Left ventricle myocardium superior (tissue), 1 donor: ENCODE measurements at regions of chr10 and their contacts with region 1.

Region 1: GRCh38 chr10:88553116-88553752 is 29.9 kb downstream of the RNLS start:
- DNase-seq: no peak
- ATAC-seq: peak; percentile 93

Region 2: DNA sequence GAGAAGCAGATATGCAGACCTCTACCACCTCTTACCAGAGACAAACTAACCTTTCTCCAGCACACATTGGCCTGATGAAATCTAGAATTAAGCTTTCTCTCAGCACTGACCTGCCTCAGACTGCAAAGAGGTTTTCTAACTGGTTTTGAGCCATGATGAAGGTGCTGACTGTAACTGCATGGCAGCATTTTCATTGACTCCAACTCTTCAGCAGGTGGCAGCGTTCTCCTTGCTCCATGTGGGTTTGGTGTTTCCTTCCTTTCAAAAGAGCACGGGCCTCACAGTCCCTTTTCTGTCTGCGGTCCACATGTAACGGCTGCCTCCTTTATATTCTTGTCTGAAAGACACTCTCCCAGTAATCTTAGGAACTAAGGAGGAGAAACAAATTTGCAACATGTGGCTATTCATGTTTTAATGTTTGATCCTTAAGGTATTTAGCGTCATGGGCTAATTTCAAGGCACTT is 702.5 kb before region 1 on chr10:
- intact Hi-C with region 1: loop called (anchors 5 kb)
- DNase-seq: peak; percentile 55
- ATAC-seq: peak; percentile 97

Region 3: GRCh38 chr10:88138319-88138848 is 414.9 kb before region 1 on chr10:
- intact Hi-C with region 1: loop called (anchors 10 kb)
- DNase-seq: no peak
- ATAC-seq: no peak

Region 4: DNA sequence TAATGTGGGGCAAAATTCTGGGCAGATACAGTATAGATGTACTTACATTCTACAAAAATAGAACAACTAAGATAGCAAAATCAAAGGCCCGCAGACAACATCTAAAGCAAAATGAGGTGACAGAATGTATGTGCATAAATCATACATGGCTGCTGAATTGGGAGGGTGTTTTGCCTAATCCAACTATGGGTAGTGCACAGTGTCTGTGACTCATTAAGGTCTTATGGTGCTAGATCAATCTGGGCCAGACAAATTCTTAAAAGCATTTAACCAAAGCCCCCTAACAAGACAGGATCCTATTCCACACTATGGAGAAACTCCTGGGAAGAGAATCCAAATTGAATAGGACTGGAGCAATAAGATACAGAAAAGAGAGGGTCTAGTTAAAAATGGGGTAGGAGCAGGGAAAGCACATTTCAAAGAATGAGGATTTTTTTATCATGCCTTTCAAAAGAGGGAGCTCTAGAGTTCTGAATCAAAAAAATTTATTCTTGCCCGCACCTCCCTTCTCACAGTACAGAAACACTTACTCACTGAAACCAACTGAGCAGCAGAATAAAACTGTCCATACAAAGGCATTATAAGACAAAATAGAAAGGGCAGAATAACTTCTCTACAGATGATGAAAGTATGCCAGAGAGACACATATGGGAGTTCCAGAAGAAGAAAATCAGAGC is 151.4 kb before region 1 on chr10:
- intact Hi-C with region 1: loop called (anchors 5 kb)
- DNase-seq: no peak
- ATAC-seq: no peak

Region 5: GRCh38 chr10:88473989-88474883 is 79.0 kb before region 1 on chr10:
- intact Hi-C with region 1: no loop called
- DNase-seq: no peak
- ATAC-seq: peak; percentile 50